ENCODE measurements at regions of chr14 and their contacts with region 1.

Region 1: GRCh38 chr14:50943943-50944646 is at the start of gene PYGL:
- DNase-seq: peak; percentile 39
- H3K4me3 Mint-ChIP-seq: peak within 1 kb of the TSS; percentile 70
- H3K27ac Mint-ChIP-seq: no peak within 1 kb of the TSS
- H3K4me1 Mint-ChIP-seq: peaks cover 10% of the 10 kb centered on the region
- H3K27me3 Mint-ChIP-seq: peaks cover 32% of the 10 kb centered on the region
- total RNA-seq, gene PYGL: 0.37 to 0.38 TPM

Region 2: GRCh38 chr14:50099335-50099734 is 844.8 kb before region 1 on chr14:
- CTCF ChIA-PET with region 1: no interaction called
- intact Hi-C with region 1: no loop called
- DNase-seq: no peak
- H3K4me3 Mint-ChIP-seq: no peak overlapping the region
- H3K27ac Mint-ChIP-seq: no peak overlapping the region
- H3K4me1 Mint-ChIP-seq: peaks cover 57% of the 10 kb centered on the region
- H3K27me3 Mint-ChIP-seq: no peaks in the 10 kb centered on the region

Region 3: DNA sequence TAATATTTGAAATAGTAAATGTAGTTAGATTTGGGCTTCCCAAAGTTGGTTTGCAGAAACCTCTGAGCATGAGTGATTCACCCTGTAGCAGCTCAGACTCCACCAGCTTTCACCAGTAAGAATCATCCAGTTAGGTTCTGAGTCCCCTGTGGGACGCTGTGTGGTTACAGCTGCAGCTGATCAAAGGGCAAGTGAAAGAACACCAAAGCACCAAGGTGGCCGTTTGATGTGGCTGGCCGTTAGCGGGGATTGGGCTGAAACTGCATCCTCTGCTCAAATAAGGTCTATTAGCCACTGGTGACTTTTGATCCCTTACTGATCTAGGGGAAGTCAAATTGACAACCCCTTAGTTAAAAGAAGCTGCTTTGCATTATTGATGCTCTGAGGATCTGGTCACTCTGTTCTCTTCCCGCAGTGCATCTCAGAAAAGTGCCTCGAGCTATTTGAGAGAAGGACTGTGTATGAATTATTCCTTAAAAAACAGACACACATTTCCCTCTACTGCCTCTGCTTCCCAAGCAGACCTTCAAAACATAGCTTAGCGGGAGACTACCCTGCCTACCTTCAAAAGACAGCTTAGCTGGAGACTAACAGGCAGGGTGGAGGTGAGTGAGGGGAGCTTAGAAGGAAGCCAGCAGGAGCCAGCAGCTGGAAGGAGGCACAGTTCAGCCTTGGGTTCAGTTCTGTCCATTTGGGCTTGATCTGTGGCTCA is 68.6 kb before region 1 on chr14:
- CTCF ChIA-PET with region 1: no interaction called
- intact Hi-C with region 1: loop called (anchors 5 kb)
- DNase-seq: peak; percentile 89
- H3K4me3 Mint-ChIP-seq: no peak overlapping the region
- H3K27ac Mint-ChIP-seq: no peak overlapping the region
- H3K4me1 Mint-ChIP-seq: peaks cover 26% of the 10 kb centered on the region
- H3K27me3 Mint-ChIP-seq: peaks cover 51% of the 10 kb centered on the region